CD14-positive monocyte (primary cell): ENCODE measurements at regions of chr17 and their contacts with region 1.

Region 1: GRCh38 chr17:57995076-57995956 is 7.3 kb upstream of the VEZF1 start:
- DNase-seq: peak; percentile 59 to 73 (median 70)
- H3K4me3 ChIP-seq: no peak overlapping the region
- H3K4me3 Mint-ChIP-seq: peak overlapping the region in 1 of 2 donors; percentile 23
- H3K27ac ChIP-seq: no peak overlapping the region
- H3K27ac Mint-ChIP-seq: peak overlapping the region in 1 of 7 donors; percentile 23
- H3K4me1 ChIP-seq: peaks cover 13 to 20% of the 10 kb centered on the region in 2 donors
- H3K4me1 Mint-ChIP-seq: peaks cover 26% of the 10 kb centered on the region
- H3K27me3 ChIP-seq: no peaks in the 10 kb centered on the region
- H3K27me3 Mint-ChIP-seq: no peaks in the 10 kb centered on the region
- CTCF ChIP-seq: peak; percentile 89

Region 2: DNA sequence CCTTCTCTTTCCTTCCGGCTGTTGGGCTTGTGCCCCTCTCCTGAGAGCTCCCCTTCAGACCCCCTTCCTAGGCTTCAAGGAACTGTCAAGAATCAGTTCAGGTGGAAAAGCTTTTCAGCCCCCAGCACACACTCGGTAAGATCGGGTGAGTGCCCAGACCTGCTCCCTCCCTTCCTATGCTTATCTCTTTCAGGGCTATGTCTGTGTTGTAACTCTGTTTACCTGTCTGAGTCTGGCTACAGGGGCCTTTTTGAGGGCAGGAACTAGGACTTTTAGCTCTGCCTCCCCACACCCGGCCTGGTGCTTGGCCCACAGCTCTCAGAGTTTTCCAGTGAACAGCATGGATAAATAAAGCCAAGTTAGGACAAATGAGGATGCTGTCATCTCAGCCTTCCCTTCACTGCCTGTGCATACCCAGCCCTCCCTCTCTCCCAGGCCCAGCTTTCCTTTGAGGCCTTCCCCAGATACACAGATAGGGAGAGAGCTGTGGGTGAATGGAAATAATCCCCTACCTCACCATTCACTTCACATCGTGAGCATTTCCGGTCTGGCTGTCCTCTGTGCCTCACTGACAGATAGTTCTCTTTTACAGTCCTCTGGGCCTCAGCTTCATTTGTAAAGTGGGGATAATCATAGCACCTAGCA is 139.8 kb before region 1 on chr17:
- intact Hi-C with region 1: loop called (anchors 2 to 5 kb)
- DNase-seq: no peak
- H3K4me3 ChIP-seq: no peak overlapping the region
- H3K4me3 Mint-ChIP-seq: no peak overlapping the region
- H3K27ac ChIP-seq: no peak overlapping the region
- H3K27ac Mint-ChIP-seq: no peak overlapping the region
- H3K4me1 ChIP-seq: peaks cover 25 to 26% of the 10 kb centered on the region in 2 donors
- H3K4me1 Mint-ChIP-seq: peaks cover 33% of the 10 kb centered on the region
- H3K27me3 ChIP-seq: no peaks in the 10 kb centered on the region
- H3K27me3 Mint-ChIP-seq: peaks cover 0 to 1% (median 0%) of the 10 kb centered on the region in 3 donors
- CTCF ChIP-seq: no peak